Activated T-helper 2 cell treated with anti-CD3 and anti-CD28 coated beads, Interferon-gamma antibody, Interleukin-2, Interleukin-4, amounts not matched to agents 10 μg/mL and 5 μg/mL and 100 μg/mL, durations not matched to agents 14 hours and 24 hours and 36 hours (primary cell): ENCODE measurements at regions of chr4 and their contacts with region 1.

Region 1: GRCh38 chr4:163332500-163333406 is at the start of gene NPY1R:
- DNase-seq: no peak
- H3K4me3 Mint-ChIP-seq: peak within 1 kb of the TSS; percentile 41
- H3K27ac Mint-ChIP-seq: no peak within 1 kb of the TSS
- H3K4me1 Mint-ChIP-seq: peaks cover 9% of the 10 kb centered on the region
- H3K27me3 Mint-ChIP-seq: peaks cover 42% of the 10 kb centered on the region
- total RNA-seq, gene NPY1R: not detected in 2 replicates

Region 2: GRCh38 chr4:162497564-162498167 is 835.1 kb before region 1 on chr4:
- intact Hi-C with region 1: loop called (anchors 2 kb)
- DNase-seq: no peak
- H3K4me3 Mint-ChIP-seq: no peak overlapping the region
- H3K27ac Mint-ChIP-seq: no peak overlapping the region
- H3K4me1 Mint-ChIP-seq: no peaks in the 10 kb centered on the region
- H3K27me3 Mint-ChIP-seq: no peaks in the 10 kb centered on the region

Region 3: DNA sequence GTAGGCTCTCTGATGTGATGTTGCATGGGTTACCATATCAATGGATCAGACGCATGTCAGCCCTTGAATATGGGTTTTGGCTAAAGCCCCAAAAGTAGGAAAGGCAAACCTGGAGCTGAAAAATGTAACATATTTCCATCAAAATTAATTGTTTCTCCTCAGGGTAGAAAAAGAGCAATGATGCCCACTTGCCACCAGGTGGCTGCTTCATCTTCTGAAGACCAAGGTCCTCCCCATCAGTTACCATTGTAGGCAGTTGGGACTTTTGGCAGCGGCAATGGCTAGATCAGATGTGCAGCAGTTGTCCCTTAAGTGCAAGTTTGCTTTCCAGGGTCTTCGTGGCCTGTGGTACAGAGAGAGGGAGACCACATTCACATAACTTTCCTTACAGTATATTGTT is 284.3 kb before region 1 on chr4:
- intact Hi-C with region 1: loop called (anchors 5 kb)
- DNase-seq: no peak
- H3K4me3 Mint-ChIP-seq: no peak overlapping the region
- H3K27ac Mint-ChIP-seq: no peak overlapping the region
- H3K4me1 Mint-ChIP-seq: no peaks in the 10 kb centered on the region
- H3K27me3 Mint-ChIP-seq: no peaks in the 10 kb centered on the region

Region 4: DNA sequence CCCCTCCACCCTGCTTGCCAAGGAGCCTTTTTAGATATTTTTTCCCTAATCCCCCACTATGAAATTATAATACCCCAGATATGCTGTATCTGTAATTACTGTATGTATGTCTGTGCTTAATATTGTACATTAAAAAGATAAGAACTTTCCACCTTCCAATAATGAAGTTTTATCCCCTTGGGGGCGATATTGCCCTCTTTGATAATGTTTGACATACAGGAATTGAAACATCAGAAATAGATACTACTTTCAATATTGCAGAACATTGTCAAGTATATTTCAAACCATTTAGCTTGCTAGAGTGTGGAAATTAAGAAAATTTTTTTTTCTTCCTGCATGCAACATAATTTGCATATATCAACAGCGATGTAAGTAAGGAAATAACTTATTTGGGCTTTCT is 225.0 kb before region 1 on chr4:
- intact Hi-C with region 1: loop called (anchors 1 kb)
- DNase-seq: no peak
- H3K4me3 Mint-ChIP-seq: no peak overlapping the region
- H3K27ac Mint-ChIP-seq: no peak overlapping the region
- H3K4me1 Mint-ChIP-seq: peaks cover 24% of the 10 kb centered on the region
- H3K27me3 Mint-ChIP-seq: no peaks in the 10 kb centered on the region